Aorta (tissue), 5 donors: ENCODE measurements at regions of chr20 and their contacts with region 1.

Region 1: GRCh38 chr20:44388466-44389023 is 33.0 kb downstream of the HNF4A start:
- DNase-seq: peak; percentile 70 to 88
- ATAC-seq: peak; percentile 68
- H3K4me3 ChIP-seq: no peak overlapping the region
- H3K27ac ChIP-seq: no peak overlapping the region
- H3K4me1 ChIP-seq: no peaks in the 10 kb centered on the region
- H3K27me3 ChIP-seq: no peaks in the 10 kb centered on the region

Region 2: DNA sequence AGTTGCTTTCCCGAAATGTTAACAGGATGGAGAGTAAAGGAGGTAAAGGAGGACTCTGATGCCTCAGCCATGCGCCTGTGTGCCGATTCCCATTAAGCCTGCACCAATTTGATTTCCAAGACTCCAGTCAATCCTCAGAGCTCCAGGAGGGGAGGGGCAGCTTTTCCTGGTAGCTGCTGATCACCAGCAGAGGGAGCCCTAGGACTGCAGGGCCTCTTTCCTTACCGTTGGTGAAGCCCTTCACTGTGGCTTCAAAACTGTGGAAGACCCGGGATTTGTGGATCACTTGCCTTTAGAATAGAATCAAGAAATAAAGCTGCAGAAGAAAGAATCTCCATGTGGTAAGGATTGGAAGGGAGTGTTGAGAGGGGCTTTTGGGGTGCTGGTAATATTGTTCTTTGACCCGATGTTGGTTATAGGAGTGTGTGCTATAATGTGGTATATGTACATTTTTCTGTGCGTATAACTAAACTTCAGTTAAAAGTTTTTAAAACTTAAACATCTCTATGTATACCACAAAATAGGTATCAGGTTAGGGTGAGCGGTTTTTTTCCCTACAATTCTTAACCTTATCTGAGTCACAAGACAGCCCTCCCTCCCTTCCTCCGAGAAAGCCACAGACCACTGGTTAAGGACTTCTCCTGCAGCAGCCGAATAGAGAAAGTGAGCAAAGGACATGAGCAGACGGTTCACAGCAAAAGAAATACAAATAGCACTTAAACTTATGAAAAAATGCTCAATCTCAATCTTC is 171.0 kb before region 1 on chr20:
- intact Hi-C with region 1: loop called in 1 of 2 experiments (anchors 5 kb)
- DNase-seq: peak in 1 of 2 donors; percentile 72
- ATAC-seq: no peak
- H3K4me3 ChIP-seq: no peak overlapping the region
- H3K27ac ChIP-seq: no peak overlapping the region
- H3K4me1 ChIP-seq: no peaks in the 10 kb centered on the region
- H3K27me3 ChIP-seq: no peaks in the 10 kb centered on the region

Region 3: DNA sequence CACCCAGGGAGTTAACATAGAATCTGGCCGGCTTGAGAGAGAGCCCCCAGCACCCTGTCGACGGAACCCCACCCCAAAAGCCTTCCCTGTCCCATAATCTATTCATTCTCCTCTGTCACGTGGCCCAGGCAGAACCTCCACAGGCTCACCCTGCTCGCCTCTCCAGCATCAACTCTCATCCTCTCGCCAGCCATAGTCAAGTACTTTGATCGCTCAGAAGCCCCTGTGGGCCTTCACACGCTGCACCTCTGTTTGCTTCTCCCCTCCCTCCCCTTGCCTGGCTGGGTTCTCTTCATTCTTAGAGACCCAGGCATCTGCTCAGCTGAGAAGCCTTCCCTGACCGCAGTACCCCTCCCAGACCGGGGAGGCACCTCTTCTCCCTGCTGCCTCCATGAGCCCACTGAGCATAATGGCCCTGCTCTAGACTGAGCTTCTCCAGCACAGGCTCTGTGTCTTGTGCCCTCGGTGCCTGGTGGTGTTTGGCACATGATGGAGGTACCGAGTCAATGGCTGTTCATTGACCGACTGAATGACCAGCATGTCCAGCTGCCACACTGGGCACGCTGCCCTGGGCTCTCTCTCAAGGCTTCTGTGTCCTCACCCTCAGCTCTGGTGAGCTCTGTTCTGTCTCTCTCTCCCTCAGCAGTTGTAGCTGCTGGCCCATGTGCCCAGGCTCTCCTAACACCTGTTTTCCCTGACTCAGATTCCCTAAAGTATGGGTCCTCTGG is 227.5 kb after region 1 on chr20:
- intact Hi-C with region 1: loop called (anchors 2 to 5 kb)
- DNase-seq: peak; percentile 44 to 72
- ATAC-seq: no peak
- H3K4me3 ChIP-seq: no peak overlapping the region
- H3K27ac ChIP-seq: peak overlapping the region in 1 of 2 donors; percentile 75
- H3K4me1 ChIP-seq: no peaks in the 10 kb centered on the region
- H3K27me3 ChIP-seq: no peaks in the 10 kb centered on the region

Region 4: DNA sequence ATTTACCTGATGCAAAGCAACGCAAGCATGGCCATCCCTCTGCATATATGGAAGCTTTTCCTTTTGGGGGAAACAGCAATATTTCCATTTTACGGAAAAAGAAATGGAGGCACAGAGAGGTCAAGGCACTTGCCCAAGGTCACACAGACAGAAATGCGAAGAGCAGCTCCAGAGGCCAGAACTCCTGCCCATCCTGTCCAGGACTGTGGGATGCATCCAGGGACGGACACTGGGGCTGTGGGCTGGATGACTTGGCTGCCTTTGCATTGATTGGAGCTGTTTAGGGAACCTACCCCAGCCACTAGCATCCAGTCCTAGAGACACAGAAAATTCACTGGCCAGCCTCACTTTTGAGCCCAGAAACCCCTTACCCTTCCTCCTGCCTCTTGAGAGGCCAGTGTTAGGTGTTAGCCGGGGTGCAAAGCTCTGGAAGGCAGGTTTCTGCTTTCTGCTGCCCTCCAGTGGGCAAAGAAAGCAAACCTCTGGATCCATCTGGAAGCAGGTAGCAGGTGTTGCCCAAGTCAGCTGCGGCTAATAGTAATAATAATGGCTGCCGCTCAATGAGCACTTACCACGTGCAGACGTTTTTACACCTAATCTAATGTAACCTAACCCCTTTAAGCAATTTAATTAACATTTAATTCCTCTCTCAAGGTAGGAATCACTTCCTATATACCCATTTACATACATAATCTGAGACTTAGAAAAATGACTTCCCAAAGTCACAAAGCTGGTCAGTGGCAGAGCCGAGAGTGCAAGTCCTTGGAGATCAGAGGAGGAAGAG is 294.9 kb after region 1 on chr20:
- intact Hi-C with region 1: loop called in 1 of 2 experiments (anchors 2 kb)
- DNase-seq: no peak
- ATAC-seq: no peak
- H3K4me3 ChIP-seq: no peak overlapping the region
- H3K27ac ChIP-seq: no peak overlapping the region
- H3K4me1 ChIP-seq: no peaks in the 10 kb centered on the region
- H3K27me3 ChIP-seq: no peaks in the 10 kb centered on the region

Region 5: GRCh38 chr20:44733341-44734069 is 345.0 kb after region 1 on chr20:
- intact Hi-C with region 1: loop called in 1 of 2 experiments (anchors 10 kb)
- DNase-seq: peak; percentile 77 to 87
- ATAC-seq: peak; percentile 78
- H3K4me3 ChIP-seq: no peak overlapping the region
- H3K27ac ChIP-seq: peak overlapping the region in 1 of 2 donors; percentile 91
- H3K4me1 ChIP-seq: peaks cover 0 to 4% of the 10 kb centered on the region in 2 donors
- H3K27me3 ChIP-seq: no peaks in the 10 kb centered on the region